ENCODE measurements at regions of chrX and their contacts with region 1.

Region 1: GRCh38 chrX:66728818-66729271 is 90.0 kb upstream of the EDA2R start:
- DNase-seq: peak; percentile 43
- H3K4me3 ChIP-seq: peak overlapping the region; percentile 22 to 31
- H3K27ac ChIP-seq: peak overlapping the region; percentile 50 to 61
- H3K4me1 ChIP-seq: no peaks in the 10 kb centered on the region
- H3K27me3 ChIP-seq: no peaks in the 10 kb centered on the region
- CTCF ChIP-seq: peak in 3 of 4 experiments; percentile 54 to 62 (median 59)
- POLR2A ChIP-seq: no peak

Region 2: GRCh38 chrX:66200855-66201795 is 527.7 kb before region 1 on chrX:
- intact Hi-C with region 1: loop called (anchors 10 kb)
- DNase-seq: no peak
- H3K4me3 ChIP-seq: no peak overlapping the region
- H3K27ac ChIP-seq: no peak overlapping the region
- H3K4me1 ChIP-seq: no peaks in the 10 kb centered on the region
- H3K27me3 ChIP-seq: no peaks in the 10 kb centered on the region
- CTCF ChIP-seq: peak in 3 of 4 experiments; percentile 7 to 27 (median 23)
- POLR2A ChIP-seq: no peak